GM10248 (cell line): ENCODE measurements at regions of chr11 and their contacts with region 1.

Region 1: GRCh38 chr11:35305670-35306382 is 113.5 kb downstream of the SLC1A2 start:
- DNase-seq: peak; percentile 62
- CTCF ChIP-seq: peak; percentile 78

Region 2: DNA sequence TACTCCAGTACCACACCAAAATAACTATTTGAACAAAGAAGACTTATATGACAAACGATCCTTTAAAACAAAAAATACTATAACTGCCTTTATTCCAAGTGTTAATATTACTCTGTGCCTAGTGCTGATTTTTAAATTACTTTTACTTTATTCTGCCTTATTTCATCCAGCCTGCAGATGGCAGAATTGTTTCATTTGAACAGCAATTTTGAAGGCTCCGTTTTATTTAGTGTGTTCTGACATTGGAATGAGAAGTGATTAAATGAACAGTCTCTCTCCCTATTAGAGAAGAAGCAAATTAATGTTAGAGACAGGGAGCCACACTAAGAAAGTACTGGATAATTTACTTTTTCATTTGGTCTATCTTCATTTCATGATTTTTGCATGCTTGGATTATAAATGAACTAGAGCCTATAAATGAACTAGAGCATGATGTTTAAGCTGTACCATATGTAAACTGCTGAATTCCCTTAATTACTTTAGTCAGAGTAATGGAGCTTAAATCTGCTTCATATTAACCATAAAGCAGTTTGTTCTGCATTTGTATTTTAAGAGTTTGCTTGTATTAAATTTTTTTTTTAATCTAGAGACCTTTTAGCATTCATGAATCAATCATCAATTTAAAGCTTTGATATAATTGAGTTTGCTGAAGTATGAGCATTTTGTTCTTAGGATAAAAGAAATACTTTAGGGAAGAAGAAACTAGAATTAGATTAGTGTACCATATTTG is 379.6 kb before region 1 on chr11:
- CTCF ChIA-PET with region 1: interaction called, 10 read pairs
- POLR2A ChIA-PET with region 1: no interaction called
- DNase-seq: no peak
- CTCF ChIP-seq: peak; percentile 58

Region 3: GRCh38 chr11:35083433-35084238 is 222.2 kb before region 1 on chr11:
- CTCF ChIA-PET with region 1: no interaction called
- POLR2A ChIA-PET with region 1: no interaction called
- DNase-seq: peak; percentile 77
- CTCF ChIP-seq: no peak

Region 4: GRCh38 chr11:35237860-35238715 is 67.7 kb before region 1 on chr11:
- CTCF ChIA-PET with region 1: interaction called, 12 read pairs
- POLR2A ChIA-PET with region 1: no interaction called
- DNase-seq: peak; percentile 34
- CTCF ChIP-seq: peak; percentile 52

Region 5: GRCh38 chr11:35272391-35272902 is 33.4 kb before region 1 on chr11:
- CTCF ChIA-PET with region 1: interaction called, 12 read pairs
- POLR2A ChIA-PET with region 1: no interaction called
- DNase-seq: peak; percentile 68
- CTCF ChIP-seq: no peak

Region 6: GRCh38 chr11:35288817-35289541 is 16.8 kb before region 1 on chr11:
- CTCF ChIA-PET with region 1: interaction called, 96 read pairs
- POLR2A ChIA-PET with region 1: interaction called, 3 read pairs
- DNase-seq: no peak
- CTCF ChIP-seq: no peak

Region 7: GRCh38 chr11:35321532-35322359 is 15.9 kb after region 1 on chr11:
- CTCF ChIA-PET with region 1: interaction called, 51 read pairs
- POLR2A ChIA-PET with region 1: no interaction called
- DNase-seq: no peak
- CTCF ChIP-seq: no peak

Region 8: DNA sequence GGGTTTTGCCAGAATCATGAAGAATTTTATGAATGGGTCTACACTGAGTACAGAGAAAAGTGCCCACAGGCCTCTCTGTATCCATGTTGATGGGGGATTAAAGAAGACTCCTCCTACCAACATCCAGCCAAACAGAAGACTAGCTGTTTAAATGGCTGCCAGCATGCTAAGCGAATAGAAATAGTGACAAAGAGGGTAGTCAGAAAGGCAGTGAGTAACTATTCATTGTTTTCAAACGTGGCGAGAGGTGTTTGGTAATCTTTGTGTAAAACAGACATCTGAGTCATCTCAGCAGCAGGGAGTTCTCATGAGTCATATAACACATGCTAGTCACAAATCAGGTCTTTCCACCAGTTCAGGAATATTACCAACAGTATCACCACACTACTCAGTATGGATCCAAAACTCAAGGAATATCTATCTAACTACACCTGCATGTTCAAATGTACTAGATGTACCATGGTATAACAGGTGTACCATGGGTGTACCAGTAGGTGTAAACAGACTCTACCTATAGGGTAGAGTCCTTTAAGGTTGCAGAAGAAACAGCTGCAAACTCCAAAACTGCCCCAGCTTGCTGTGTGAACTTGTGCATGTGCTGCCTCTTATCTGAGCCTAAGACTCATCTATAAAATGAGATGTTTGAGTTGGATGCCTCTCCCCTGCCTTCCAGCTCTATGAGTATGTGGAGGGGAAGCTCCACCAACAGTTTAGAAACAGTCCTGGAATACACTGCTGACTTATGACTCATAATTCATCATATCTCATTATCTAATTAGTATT is 31.5 kb after region 1 on chr11:
- CTCF ChIA-PET with region 1: interaction called, 13 read pairs
- POLR2A ChIA-PET with region 1: no interaction called
- DNase-seq: no peak
- CTCF ChIP-seq: no peak